CD8-positive, alpha-beta T cell (primary cell): ENCODE measurements at regions of chr11 and their contacts with region 1.

Region 1: GRCh38 chr11:58579192-58580129 is 598 bp downstream of the ZFP91 start:
- DNase-seq: peak; percentile 84 to 97 (median 93)
- ATAC-seq: peak; percentile 30
- H3K4me3 ChIP-seq: peak overlapping the region; percentile 70 to 82
- H3K4me3 Mint-ChIP-seq: peak overlapping the region; percentile 99
- H3K27ac ChIP-seq: peak overlapping the region; percentile 91 to 92
- H3K27ac Mint-ChIP-seq: peak overlapping the region; percentile 100
- H3K4me1 ChIP-seq: peaks cover 54% of the 10 kb centered on the region
- H3K4me1 Mint-ChIP-seq: peaks cover 72% of the 10 kb centered on the region
- H3K27me3 ChIP-seq: no peaks in the 10 kb centered on the region
- H3K27me3 Mint-ChIP-seq: no peaks in the 10 kb centered on the region
- CTCF ChIP-seq: peak; percentile 80

Region 2: DNA sequence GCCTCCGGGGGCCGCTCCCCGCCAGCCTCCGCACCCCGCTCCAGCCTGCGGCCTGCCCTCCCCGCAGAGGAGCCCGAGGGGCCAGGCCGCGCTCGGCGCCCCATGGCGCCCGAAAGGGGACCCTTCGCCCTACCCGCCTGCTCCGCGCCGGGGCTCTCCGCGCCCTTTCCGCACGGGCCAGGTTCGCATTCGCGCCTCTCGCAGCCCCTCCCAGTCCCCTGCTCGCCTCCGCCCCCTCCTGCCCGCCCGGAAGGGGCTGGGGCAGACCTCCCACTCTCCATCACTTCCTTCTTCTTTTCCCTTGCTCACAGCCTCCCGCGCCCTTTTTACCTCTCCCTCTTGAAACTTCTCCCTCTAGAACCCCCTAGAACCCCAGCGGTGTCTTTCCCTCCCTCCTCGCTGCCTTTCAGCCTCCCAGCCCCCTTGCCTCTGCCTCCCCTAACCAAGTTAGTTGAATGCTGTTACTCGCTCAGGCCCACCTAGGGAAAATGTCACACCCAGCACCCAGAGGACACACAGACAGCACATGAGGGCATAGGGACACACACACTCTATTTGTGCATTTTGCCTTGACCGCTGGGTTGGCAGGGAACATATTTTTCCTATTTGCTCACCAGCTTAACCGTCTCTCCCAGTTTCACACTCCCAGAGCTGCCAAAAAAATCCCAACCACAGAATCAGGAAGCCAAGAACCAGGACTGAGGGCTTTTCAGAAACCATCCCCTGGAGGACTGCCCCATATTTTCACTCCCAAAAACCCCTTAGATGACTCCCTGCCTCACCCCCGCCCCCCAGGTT is 1152.3 kb before region 1 on chr11 and contains the start of gene SLC43A3:
- CTCF ChIA-PET with region 1: no interaction called
- POLR2A ChIA-PET with region 1: no interaction called
- intact Hi-C with region 1: loop called in 1 of 2 experiments (anchors 2 kb)
- DNase-seq: peak in 8 of 9 experiments; percentile 46 to 80 (median 64)
- ATAC-seq: peak; percentile 32
- H3K4me3 ChIP-seq: peak within 1 kb of the TSS; percentile 47 to 63
- H3K4me3 Mint-ChIP-seq: peak within 1 kb of the TSS; percentile 86
- H3K27ac ChIP-seq: peak within 1 kb of the TSS in 1 of 2 experiments; percentile 85
- H3K27ac Mint-ChIP-seq: peak within 1 kb of the TSS; percentile 89
- H3K4me1 ChIP-seq: peaks cover 31% of the 10 kb centered on the region
- H3K4me1 Mint-ChIP-seq: peaks cover 46% of the 10 kb centered on the region
- H3K27me3 ChIP-seq: no peaks in the 10 kb centered on the region
- H3K27me3 Mint-ChIP-seq: no peaks in the 10 kb centered on the region
- CTCF ChIP-seq: no peak
- total RNA-seq, gene SLC43A3: 9.3 to 11.3 TPM

Region 3: DNA sequence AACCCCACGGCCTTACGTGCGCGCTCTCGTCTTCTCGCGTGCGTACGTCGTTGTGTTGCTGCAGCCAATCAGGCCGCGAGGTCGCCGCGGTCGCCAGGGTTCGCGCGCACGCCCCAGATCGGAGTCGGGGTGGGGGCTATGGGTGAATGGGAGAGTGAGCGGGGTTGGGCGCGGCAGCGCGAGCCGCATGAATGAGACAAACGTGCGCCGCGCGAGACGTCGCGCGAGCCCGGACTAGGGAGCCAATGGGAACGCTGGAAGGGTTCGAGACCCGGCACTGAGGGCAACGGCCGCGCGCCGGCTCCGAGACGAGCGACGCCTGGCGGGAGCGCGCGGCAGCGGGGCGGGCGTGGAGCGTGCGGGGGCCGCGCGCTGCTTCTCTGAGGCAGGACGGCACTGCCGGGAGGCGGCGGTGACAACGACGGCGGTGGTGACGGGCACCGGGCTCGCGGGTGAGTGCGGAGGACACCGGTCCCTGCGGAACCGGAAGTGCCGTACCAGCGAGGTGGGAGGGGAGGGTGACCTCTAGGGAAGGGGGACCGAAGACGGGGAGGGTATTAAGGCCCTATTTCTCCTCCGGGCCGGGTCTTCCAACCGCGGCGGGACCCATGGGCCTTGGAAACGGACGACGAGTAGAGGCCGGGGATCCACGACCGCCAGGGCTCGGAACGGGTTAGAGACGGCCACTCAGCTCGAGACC is 911.6 kb before region 1 on chr11 and contains the start of gene ZDHHC5:
- CTCF ChIA-PET with region 1: no interaction called
- POLR2A ChIA-PET with region 1: interaction called, 5 read pairs
- intact Hi-C with region 1: loop called (anchors 1 to 2 kb)
- DNase-seq: peak; percentile 99 to 100 (median 99)
- ATAC-seq: peak; percentile 85
- H3K4me3 ChIP-seq: peak within 1 kb of the TSS; percentile 83 to 96
- H3K4me3 Mint-ChIP-seq: peak within 1 kb of the TSS; percentile 85
- H3K27ac ChIP-seq: peak within 1 kb of the TSS; percentile 91 to 99
- H3K27ac Mint-ChIP-seq: peak within 1 kb of the TSS; percentile 97
- H3K4me1 ChIP-seq: peaks cover 41% of the 10 kb centered on the region
- H3K4me1 Mint-ChIP-seq: peaks cover 56% of the 10 kb centered on the region
- H3K27me3 ChIP-seq: no peaks in the 10 kb centered on the region
- H3K27me3 Mint-ChIP-seq: no peaks in the 10 kb centered on the region
- CTCF ChIP-seq: peak; percentile 31
- total RNA-seq, gene ZDHHC5: 65.0 to 66.7 TPM

Region 4: GRCh38 chr11:58490827-58491226 is 88.6 kb before region 1 on chr11:
- CTCF ChIA-PET with region 1: no interaction called
- POLR2A ChIA-PET with region 1: no interaction called
- intact Hi-C with region 1: no loop called
- DNase-seq: no peak
- ATAC-seq: no peak
- H3K4me3 ChIP-seq: no peak overlapping the region
- H3K4me3 Mint-ChIP-seq: no peak overlapping the region
- H3K27ac ChIP-seq: no peak overlapping the region
- H3K27ac Mint-ChIP-seq: no peak overlapping the region
- H3K4me1 ChIP-seq: peaks cover under 1% of the 10 kb centered on the region
- H3K4me1 Mint-ChIP-seq: peaks cover 3% of the 10 kb centered on the region
- H3K27me3 ChIP-seq: no peaks in the 10 kb centered on the region
- H3K27me3 Mint-ChIP-seq: no peaks in the 10 kb centered on the region
- CTCF ChIP-seq: no peak

Region 5: GRCh38 chr11:58524232-58525036 is 55.0 kb before region 1 on chr11:
- CTCF ChIA-PET with region 1: interaction called, 15 read pairs
- POLR2A ChIA-PET with region 1: interaction called, 7 read pairs
- intact Hi-C with region 1: loop called in 1 of 2 experiments (anchors 1 kb)
- DNase-seq: peak in 8 of 9 experiments; percentile 17 to 85 (median 54)
- ATAC-seq: peak; percentile 71
- H3K4me3 ChIP-seq: peak overlapping the region in 1 of 2 experiments; percentile 24
- H3K4me3 Mint-ChIP-seq: peak overlapping the region; percentile 75
- H3K27ac ChIP-seq: peak overlapping the region; percentile 75 to 80
- H3K27ac Mint-ChIP-seq: peak overlapping the region; percentile 96
- H3K4me1 ChIP-seq: peaks cover 65% of the 10 kb centered on the region
- H3K4me1 Mint-ChIP-seq: peaks cover 69% of the 10 kb centered on the region
- H3K27me3 ChIP-seq: no peaks in the 10 kb centered on the region
- H3K27me3 Mint-ChIP-seq: no peaks in the 10 kb centered on the region
- CTCF ChIP-seq: peak; percentile 90

Region 6: GRCh38 chr11:58597486-58598144 is 18.2 kb after region 1 on chr11:
- CTCF ChIA-PET with region 1: no interaction called
- POLR2A ChIA-PET with region 1: interaction called, 3 read pairs
- intact Hi-C with region 1: loop called in 1 of 2 experiments (anchors 2 kb)
- DNase-seq: no peak
- ATAC-seq: no peak
- H3K4me3 ChIP-seq: no peak overlapping the region
- H3K4me3 Mint-ChIP-seq: peak overlapping the region; percentile 49
- H3K27ac ChIP-seq: no peak overlapping the region
- H3K27ac Mint-ChIP-seq: peak overlapping the region; percentile 87
- H3K4me1 ChIP-seq: peaks cover 43% of the 10 kb centered on the region
- H3K4me1 Mint-ChIP-seq: peaks cover 89% of the 10 kb centered on the region
- H3K27me3 ChIP-seq: no peaks in the 10 kb centered on the region
- H3K27me3 Mint-ChIP-seq: no peaks in the 10 kb centered on the region
- CTCF ChIP-seq: no peak

Region 7: GRCh38 chr11:59560702-59561469 is 981.4 kb after region 1 on chr11:
- CTCF ChIA-PET with region 1: no interaction called
- POLR2A ChIA-PET with region 1: no interaction called
- intact Hi-C with region 1: loop called in 1 of 2 experiments (anchors 5 kb)
- DNase-seq: peak; percentile 64 to 91 (median 82)
- ATAC-seq: peak; percentile 74
- H3K4me3 ChIP-seq: peak overlapping the region; percentile 73 to 80
- H3K4me3 Mint-ChIP-seq: peak overlapping the region; percentile 96
- H3K27ac ChIP-seq: peak overlapping the region; percentile 53 to 60
- H3K27ac Mint-ChIP-seq: peak overlapping the region; percentile 94
- H3K4me1 ChIP-seq: peaks cover 20% of the 10 kb centered on the region
- H3K4me1 Mint-ChIP-seq: peaks cover 35% of the 10 kb centered on the region
- H3K27me3 ChIP-seq: no peaks in the 10 kb centered on the region
- H3K27me3 Mint-ChIP-seq: no peaks in the 10 kb centered on the region
- CTCF ChIP-seq: no peak

Region 8: GRCh38 chr11:59810189-59810910 is 1230.9 kb after region 1 on chr11 and contains the start of gene MRPL16:
- CTCF ChIA-PET with region 1: no interaction called
- POLR2A ChIA-PET with region 1: no interaction called
- intact Hi-C with region 1: loop called in 1 of 2 experiments (anchors 5 kb)
- DNase-seq: peak; percentile 81 to 95 (median 91)
- ATAC-seq: peak; percentile 99
- H3K4me3 ChIP-seq: peak within 1 kb of the TSS; percentile 97 to 99
- H3K4me3 Mint-ChIP-seq: peak within 1 kb of the TSS; percentile 91
- H3K27ac ChIP-seq: peak within 1 kb of the TSS; percentile 73 to 87
- H3K27ac Mint-ChIP-seq: peak within 1 kb of the TSS; percentile 89
- H3K4me1 ChIP-seq: peaks cover 18% of the 10 kb centered on the region
- H3K4me1 Mint-ChIP-seq: peaks cover 23% of the 10 kb centered on the region
- H3K27me3 ChIP-seq: no peaks in the 10 kb centered on the region
- H3K27me3 Mint-ChIP-seq: peaks cover 4% of the 10 kb centered on the region
- CTCF ChIP-seq: peak; percentile 35
- total RNA-seq, gene MRPL16: 26.5 to 27.8 TPM